CD4-positive, alpha-beta memory T cell (primary cell): ENCODE measurements at regions of chr22 and their contacts with region 1.

Region 1: DNA sequence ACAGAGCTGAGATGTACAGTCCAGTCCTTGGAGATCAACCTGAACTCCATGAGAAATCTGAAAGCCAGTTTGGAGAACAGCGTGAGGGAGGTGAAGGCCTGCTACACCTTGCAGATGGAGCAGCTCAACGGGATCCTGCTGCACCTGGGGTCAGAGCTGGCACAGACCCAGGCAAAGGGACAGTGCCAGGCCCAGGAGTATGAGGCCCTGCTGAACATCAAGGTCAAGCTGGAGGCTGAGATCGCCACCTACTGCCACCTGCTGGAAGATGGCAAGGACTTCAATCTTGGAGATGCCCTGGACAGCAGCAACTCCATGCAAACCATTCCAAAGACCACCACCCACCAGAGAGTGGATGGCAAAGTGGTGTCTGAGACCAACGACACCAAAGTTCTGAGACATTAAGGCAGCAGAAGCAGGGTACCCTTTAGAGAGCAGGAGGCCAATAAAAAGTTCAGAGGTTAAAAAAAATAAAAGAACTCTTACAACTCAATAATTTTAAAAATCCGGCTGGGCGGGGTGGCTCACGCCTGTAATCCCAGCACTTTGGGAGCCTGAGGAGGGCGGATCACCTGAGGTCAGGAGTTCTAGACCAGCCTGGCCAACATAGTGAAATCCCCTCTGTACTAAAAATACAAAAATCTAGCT is 69.9 kb upstream of the RTL6 start:
- DNase-seq: peak in 4 of 5 donors; percentile 30 to 39 (median 34)
- H3K4me3 ChIP-seq: no peak overlapping the region
- H3K4me3 Mint-ChIP-seq: no peak overlapping the region
- H3K27ac ChIP-seq: no peak overlapping the region
- H3K27ac Mint-ChIP-seq: no peak overlapping the region
- H3K4me1 ChIP-seq: no peaks in the 10 kb centered on the region
- H3K4me1 Mint-ChIP-seq: no peaks in the 10 kb centered on the region
- H3K27me3 ChIP-seq: no peaks in the 10 kb centered on the region
- H3K27me3 Mint-ChIP-seq: peaks cover 9 to 10% of the 10 kb centered on the region in 2 donors

Region 2: GRCh38 chr22:44080936-44081861 is 486.8 kb before region 1 on chr22:
- CTCF ChIA-PET with region 1: interaction called, 58 read pairs
- POLR2A ChIA-PET with region 1: no interaction called
- intact Hi-C with region 1: no loop called
- DNase-seq: peak; percentile 52 to 63 (median 59)
- H3K4me3 ChIP-seq: no peak overlapping the region
- H3K4me3 Mint-ChIP-seq: no peak overlapping the region
- H3K27ac ChIP-seq: no peak overlapping the region
- H3K27ac Mint-ChIP-seq: no peak overlapping the region
- H3K4me1 ChIP-seq: peaks cover 4% of the 10 kb centered on the region
- H3K4me1 Mint-ChIP-seq: no peaks in the 10 kb centered on the region
- H3K27me3 ChIP-seq: no peaks in the 10 kb centered on the region
- H3K27me3 Mint-ChIP-seq: no peaks in the 10 kb centered on the region

Region 3: GRCh38 chr22:44335903-44336803 is 231.8 kb before region 1 on chr22:
- CTCF ChIA-PET with region 1: interaction called, 7 read pairs
- POLR2A ChIA-PET with region 1: no interaction called
- intact Hi-C with region 1: loop called (anchors 1 kb)
- DNase-seq: no peak
- H3K4me3 ChIP-seq: no peak overlapping the region
- H3K4me3 Mint-ChIP-seq: no peak overlapping the region
- H3K27ac ChIP-seq: no peak overlapping the region
- H3K27ac Mint-ChIP-seq: no peak overlapping the region
- H3K4me1 ChIP-seq: no peaks in the 10 kb centered on the region
- H3K4me1 Mint-ChIP-seq: peaks cover 0 to 4% (median 0%) of the 10 kb centered on the region in 4 donors
- H3K27me3 ChIP-seq: peaks cover 14% of the 10 kb centered on the region
- H3K27me3 Mint-ChIP-seq: peaks cover 8 to 10% of the 10 kb centered on the region in 2 donors

Region 4: GRCh38 chr22:44473166-44473565 is 94.8 kb before region 1 on chr22:
- CTCF ChIA-PET with region 1: no interaction called
- POLR2A ChIA-PET with region 1: no interaction called
- intact Hi-C with region 1: no loop called
- DNase-seq: no peak
- H3K4me3 ChIP-seq: no peak overlapping the region
- H3K4me3 Mint-ChIP-seq: no peak overlapping the region
- H3K27ac ChIP-seq: no peak overlapping the region
- H3K27ac Mint-ChIP-seq: no peak overlapping the region
- H3K4me1 ChIP-seq: no peaks in the 10 kb centered on the region
- H3K4me1 Mint-ChIP-seq: no peaks in the 10 kb centered on the region
- H3K27me3 ChIP-seq: no peaks in the 10 kb centered on the region
- H3K27me3 Mint-ChIP-seq: peaks cover 0 to 14% of the 10 kb centered on the region in 2 donors

Region 5: DNA sequence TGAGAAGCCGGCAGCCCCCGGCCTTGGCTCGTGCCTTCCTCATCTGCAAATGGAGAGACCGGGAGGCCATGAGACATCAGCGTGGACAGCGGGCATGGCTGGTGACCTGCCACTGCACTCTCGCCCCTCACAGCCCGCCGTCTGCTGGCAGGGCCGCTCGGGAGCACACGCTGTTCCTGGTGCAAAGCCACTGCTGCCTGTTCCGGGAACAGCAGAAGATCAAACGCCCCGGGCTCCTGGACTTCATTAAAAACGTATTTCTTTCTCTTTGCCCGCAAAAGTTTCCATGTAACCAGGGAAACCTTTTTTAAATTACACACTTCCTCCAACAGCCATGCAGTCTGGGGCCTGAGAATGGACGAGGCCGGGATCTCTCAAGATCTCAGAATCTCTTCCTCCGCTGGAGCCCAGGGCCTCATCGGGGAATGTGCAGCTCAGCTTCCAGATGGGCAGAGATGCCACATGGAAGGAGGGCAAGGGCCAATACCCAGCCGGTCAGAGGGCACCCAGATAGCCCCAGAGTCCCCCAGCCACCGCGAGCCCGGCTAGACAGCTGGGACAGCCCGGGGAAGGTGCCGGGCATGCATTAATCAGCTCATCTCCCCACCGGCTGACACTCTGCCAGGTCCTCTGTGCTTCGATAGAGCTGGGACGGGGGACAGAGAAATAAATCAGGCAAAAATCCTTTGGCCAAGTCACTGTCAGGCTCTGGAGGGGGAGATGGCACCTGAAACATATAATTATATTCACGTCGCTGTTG is 71.2 kb after region 1 on chr22:
- CTCF ChIA-PET with region 1: no interaction called
- POLR2A ChIA-PET with region 1: no interaction called
- intact Hi-C with region 1: no loop called
- DNase-seq: no peak
- H3K4me3 ChIP-seq: no peak overlapping the region
- H3K4me3 Mint-ChIP-seq: no peak overlapping the region
- H3K27ac ChIP-seq: no peak overlapping the region
- H3K27ac Mint-ChIP-seq: no peak overlapping the region
- H3K4me1 ChIP-seq: peaks cover 6% of the 10 kb centered on the region
- H3K4me1 Mint-ChIP-seq: peaks cover 0 to 2% (median 0%) of the 10 kb centered on the region in 4 donors
- H3K27me3 ChIP-seq: no peaks in the 10 kb centered on the region
- H3K27me3 Mint-ChIP-seq: peaks cover 0 to 6% of the 10 kb centered on the region in 2 donors